GM10248 (cell line): ENCODE measurements at regions of chr2 and their contacts with region 1.

Region 1: GRCh38 chr2:36507408-36507812 is 90.6 kb downstream of the FEZ2 start:
- DNase-seq: peak; percentile 58
- CTCF ChIP-seq: peak; percentile 85

Region 2: DNA sequence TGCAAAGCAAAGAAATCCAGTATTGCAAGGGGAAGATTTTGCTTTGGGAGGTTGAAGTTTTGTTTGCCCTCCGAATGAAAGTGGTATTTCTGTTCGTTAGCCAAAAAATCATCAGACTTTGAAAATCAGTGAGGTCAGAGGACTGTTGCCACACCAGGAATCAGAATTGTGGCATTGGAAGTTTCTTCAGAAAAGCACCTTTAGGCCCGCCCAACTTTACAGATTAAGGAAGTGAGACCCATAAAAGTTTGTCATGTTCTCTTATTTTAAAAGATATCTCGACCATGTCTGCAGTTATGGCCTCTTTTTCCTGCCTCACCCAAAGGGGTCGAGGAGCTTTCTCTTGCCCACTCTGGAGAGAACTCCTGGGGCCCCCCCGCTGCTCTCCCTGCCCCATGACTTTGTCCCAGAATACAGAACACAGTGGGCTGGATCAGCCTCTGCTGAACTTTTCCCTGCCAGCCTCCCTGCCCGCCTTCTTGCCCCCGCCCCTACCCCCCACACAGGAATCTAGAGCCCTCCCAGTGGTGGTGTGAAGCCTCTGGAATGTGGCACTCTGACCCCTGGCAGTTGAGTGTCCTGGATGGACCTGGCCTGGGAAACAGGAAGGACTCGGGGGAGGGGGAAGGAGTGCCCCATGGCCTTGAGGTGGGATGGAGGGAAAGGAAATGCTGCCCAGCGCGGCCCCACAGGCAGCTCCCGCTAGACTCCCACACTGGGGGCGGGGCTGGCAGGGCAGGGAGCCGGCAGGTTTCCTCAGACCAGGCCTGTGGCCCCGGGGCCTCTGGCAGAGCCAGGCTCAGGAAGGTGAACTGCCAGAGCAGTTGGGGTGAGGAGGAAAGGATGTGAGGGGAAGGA is 126.6 kb before region 1 on chr2:
- CTCF ChIA-PET with region 1: no interaction called
- POLR2A ChIA-PET with region 1: no interaction called
- DNase-seq: no peak
- CTCF ChIP-seq: no peak

Region 3: GRCh38 chr2:36492216-36492945 is 15.0 kb before region 1 on chr2:
- CTCF ChIA-PET with region 1: interaction called, 10 read pairs
- POLR2A ChIA-PET with region 1: no interaction called
- DNase-seq: no peak
- CTCF ChIP-seq: no peak

Region 4: GRCh38 chr2:36528274-36528673 is 20.9 kb after region 1 on chr2:
- CTCF ChIA-PET with region 1: interaction called, 11 read pairs
- POLR2A ChIA-PET with region 1: no interaction called
- DNase-seq: no peak
- CTCF ChIP-seq: no peak